ENCODE measurements at regions of chr12 and their contacts with region 1.

Region 1: DNA sequence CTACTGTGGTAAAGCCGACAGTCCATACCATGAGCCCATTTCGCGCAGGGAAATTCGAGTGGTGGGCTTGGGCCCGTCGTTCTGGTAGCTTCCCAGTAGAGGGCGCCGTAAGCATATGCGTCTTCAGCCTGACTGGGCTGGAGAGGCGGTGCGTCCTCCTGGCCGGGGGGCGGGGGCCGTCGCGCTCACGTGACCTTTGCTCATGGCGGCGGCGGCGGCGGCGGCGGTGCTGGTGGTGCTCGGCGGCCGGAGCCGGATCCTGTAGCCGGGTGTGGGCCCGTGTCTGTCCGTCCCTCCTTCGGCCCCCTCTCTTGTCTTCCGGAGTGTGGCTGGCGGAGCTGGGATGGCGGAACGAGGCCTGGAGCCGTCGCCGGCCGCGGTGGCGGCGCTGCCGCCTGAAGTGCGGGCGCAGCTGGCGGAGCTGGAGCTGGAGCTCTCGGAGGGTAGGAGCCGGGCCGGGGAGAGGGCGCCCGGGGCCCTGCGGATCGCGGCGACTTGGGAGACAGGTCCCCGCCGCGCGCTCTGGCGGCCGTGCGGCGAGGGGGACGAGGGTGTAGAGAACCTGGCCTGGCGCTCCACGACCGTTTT is at the start of gene DIP2B:
- DNase-seq: peak; percentile 95 to 97
- ATAC-seq: peak; percentile 93 to 98 (median 97)
- H3K4me3 ChIP-seq: peak within 1 kb of the TSS; percentile 98
- H3K27ac ChIP-seq: peak within 1 kb of the TSS; percentile 97
- H3K4me1 ChIP-seq: peaks cover 40% of the 10 kb centered on the region
- H3K27me3 ChIP-seq: no peaks in the 10 kb centered on the region
- CTCF ChIP-seq: peak; percentile 94
- total RNA-seq, gene DIP2B: 8.6 to 10.7 (median 9.4) TPM

Region 2: GRCh38 chr12:50572271-50572670 is 67.4 kb after region 1 on chr12:
- intact Hi-C with region 1: loop called in 1 of 2 experiments (anchors 5 kb)
- DNase-seq: no peak
- ATAC-seq: peak in 3 of 4 donors; percentile 83 to 88 (median 87)
- H3K4me3 ChIP-seq: no peak overlapping the region
- H3K27ac ChIP-seq: no peak overlapping the region
- H3K4me1 ChIP-seq: peaks cover 63% of the 10 kb centered on the region
- H3K27me3 ChIP-seq: no peaks in the 10 kb centered on the region
- CTCF ChIP-seq: no peak

Region 3: GRCh38 chr12:50637870-50638481 is 133.1 kb after region 1 on chr12:
- intact Hi-C with region 1: loop called (anchors 1 to 2 kb)
- DNase-seq: no peak
- ATAC-seq: peak in 2 of 4 donors; percentile 55 to 77
- H3K4me3 ChIP-seq: no peak overlapping the region
- H3K27ac ChIP-seq: no peak overlapping the region
- H3K4me1 ChIP-seq: peaks cover 20% of the 10 kb centered on the region
- H3K27me3 ChIP-seq: no peaks in the 10 kb centered on the region
- CTCF ChIP-seq: peak; percentile 68

Region 4: DNA sequence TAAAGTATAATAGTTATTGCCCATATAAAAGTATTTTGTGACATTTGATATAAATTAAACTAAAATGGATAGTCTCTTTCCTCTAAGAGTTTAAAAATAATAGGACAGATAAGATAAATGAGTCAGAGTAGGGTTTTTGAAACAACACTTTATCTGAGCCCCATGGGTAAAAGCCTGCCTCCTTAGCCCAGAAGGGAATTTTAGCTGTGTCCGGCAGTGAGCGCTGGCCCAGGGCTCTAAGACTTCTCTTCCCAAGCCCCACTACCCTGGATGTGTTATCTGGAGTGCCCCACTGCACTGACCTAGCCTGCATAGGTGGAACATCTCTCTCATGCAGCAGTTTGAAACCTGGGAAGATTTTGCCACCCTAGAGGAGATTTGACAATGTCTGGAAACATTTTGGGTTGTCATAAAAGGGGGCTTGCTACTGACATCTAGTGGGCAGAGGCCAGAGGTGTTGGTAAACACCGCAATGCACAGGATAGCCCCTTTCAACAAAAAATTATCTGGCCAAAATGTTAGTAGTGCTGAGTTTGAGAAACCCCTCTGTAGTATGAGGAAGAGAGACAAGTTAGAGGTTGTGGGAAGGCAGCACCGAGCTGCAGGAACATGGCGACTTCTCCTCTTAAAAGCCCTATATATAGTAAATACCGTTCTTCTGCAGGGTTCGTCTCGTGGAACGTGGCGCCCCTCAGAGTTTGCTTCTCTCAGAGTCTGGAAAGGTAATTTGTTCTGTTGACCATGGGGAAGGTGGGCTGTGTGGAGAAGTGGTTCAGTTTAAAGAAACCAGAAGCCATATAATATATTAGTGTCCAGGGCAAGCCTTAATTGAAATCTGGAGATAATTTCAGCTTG is 229.7 kb after region 1 on chr12:
- intact Hi-C with region 1: loop called (anchors 5 kb)
- DNase-seq: no peak
- ATAC-seq: peak in 3 of 4 donors; percentile 74 to 83 (median 76)
- H3K4me3 ChIP-seq: no peak overlapping the region
- H3K27ac ChIP-seq: no peak overlapping the region
- H3K4me1 ChIP-seq: no peaks in the 10 kb centered on the region
- H3K27me3 ChIP-seq: no peaks in the 10 kb centered on the region
- CTCF ChIP-seq: peak; percentile 65